H1 (cell line): ENCODE measurements at regions of chr1 and their contacts with region 1.

Region 1: DNA sequence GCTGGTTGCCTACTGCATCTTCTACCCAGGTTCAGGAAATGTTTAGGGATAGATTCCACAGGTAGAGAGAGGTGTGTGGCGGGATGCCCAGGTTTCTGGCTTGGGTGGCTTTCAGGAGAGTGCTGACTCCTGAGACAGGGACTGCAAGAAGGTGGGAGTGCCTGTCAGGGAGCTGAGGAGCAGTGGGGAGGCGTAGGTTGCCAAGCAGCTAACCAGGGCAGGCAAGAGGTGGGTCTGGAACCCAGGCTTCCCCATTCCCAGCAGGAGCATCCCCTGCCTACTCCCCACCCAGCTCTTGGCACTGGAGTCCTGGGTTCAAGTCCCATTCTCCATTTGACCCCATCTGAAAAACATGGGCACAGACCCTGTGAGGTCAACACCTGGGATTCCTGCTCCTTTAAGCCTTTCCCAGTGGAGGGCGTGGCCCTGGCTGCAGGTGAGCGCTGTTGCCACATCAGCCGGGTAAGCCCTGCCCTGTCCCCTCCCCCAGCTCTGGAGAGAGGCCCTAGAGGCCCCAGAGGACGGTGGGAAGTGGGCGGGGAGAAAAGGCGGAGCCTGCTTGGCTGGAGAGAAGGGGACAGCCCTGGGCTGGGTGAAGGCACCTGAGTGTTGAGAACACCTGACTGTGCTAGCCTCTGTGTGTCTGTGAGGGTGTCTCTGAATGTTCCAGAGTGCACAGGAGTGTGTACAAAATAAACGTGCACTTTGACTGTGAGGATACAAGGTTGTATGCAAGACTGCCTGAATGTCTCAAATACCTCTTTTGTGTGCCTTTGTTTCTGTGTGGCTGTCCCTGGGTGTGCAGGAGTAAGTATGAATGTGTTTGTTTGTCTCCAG is 14.0 kb upstream of the SYNC start:
- DNase-seq: peak; percentile 91 to 98
- H3K4me3 ChIP-seq: peak overlapping the region in 3 of 4 experiments; percentile 9 to 28 (median 20); a peak in 4 of 8 replicates
- H3K27ac ChIP-seq: peak overlapping the region; percentile 0; the same call in 1 of the 2 replicates
- H3K4me1 ChIP-seq: peaks cover 0 to 13% (median 13%) of the 10 kb centered on the region in 4 experiments; a peak in 6 of 7 replicates
- H3K27me3 ChIP-seq: no peaks in the 10 kb centered on the region; a peak in 1 of 7 replicates
- CTCF ChIP-seq: no peak
- EP300 ChIP-seq: peak in 1 of 2 experiments; percentile 58; a peak in 1 of 3 replicates
- POLR2A ChIP-seq: peak in 1 of 2 experiments; percentile 39; a peak in 1 of 3 replicates
- RAD21 ChIP-seq: no peak; a peak in 1 of 4 replicates

Region 2: GRCh38 chr1:32592943-32593342 is 123.6 kb before region 1 on chr1:
- CTCF ChIA-PET with region 1: no interaction called
- POLR2A ChIA-PET with region 1: no interaction called
- DNase-seq: no peak
- H3K4me3 ChIP-seq: no peak overlapping the region
- H3K27ac ChIP-seq: no peak overlapping the region
- H3K4me1 ChIP-seq: no peaks in the 10 kb centered on the region
- H3K27me3 ChIP-seq: no peaks in the 10 kb centered on the region
- CTCF ChIP-seq: no peak
- EP300 ChIP-seq: no peak
- POLR2A ChIP-seq: no peak
- RAD21 ChIP-seq: no peak

Region 3: GRCh38 chr1:32695098-32695904 is 21.2 kb before region 1 on chr1:
- CTCF ChIA-PET with region 1: interaction called, 18 read pairs
- POLR2A ChIA-PET with region 1: interaction called, 4 read pairs
- DNase-seq: no peak
- H3K4me3 ChIP-seq: no peak overlapping the region
- H3K27ac ChIP-seq: no peak overlapping the region
- H3K4me1 ChIP-seq: no peaks in the 10 kb centered on the region
- H3K27me3 ChIP-seq: no peaks in the 10 kb centered on the region
- CTCF ChIP-seq: no peak
- EP300 ChIP-seq: no peak
- POLR2A ChIP-seq: no peak
- RAD21 ChIP-seq: no peak

Region 4: DNA sequence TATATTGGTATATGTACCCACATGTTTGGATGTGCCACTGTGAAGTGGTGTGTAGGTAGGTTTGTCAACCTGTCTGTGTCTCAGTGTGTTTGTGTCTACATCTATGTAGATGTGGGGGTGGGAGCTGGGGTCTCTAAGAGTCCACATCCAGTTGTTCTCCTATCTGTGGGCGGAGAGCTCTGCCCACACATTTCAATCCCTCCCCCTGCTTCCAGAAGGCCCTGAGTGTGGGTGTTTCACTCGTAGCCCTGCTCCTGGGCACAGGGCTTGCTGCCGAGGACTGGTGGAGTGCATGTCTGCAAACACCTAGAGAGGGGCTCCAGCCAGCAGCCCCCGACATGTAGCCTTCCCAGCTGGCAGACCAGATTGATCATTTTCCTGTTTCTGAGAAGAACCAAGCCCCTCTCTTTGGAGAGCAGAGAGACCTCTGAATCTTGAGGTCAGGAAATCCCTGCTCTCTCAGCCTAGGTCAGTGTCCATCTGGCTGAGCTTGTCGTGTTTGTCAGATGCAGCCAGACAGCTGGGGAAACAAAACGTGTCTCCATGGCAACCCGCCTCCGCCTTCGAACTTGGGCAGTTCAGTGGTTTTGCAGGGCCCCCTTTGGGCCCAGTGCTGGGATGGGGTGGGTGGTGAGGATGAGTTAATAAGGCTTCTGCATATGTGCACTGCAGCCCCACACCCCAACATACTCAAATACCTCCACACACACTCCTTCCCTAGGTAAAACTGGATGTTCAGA is 17.2 kb after region 1 on chr1:
- CTCF ChIA-PET with region 1: interaction called, 56 read pairs
- POLR2A ChIA-PET with region 1: interaction called, 11 read pairs
- DNase-seq: no peak
- H3K4me3 ChIP-seq: no peak overlapping the region
- H3K27ac ChIP-seq: no peak overlapping the region
- H3K4me1 ChIP-seq: peaks cover 11 to 16% (median 14%) of the 10 kb centered on the region in 4 experiments
- H3K27me3 ChIP-seq: peaks cover 0 to 4% (median 0%) of the 10 kb centered on the region in 4 experiments; a peak in 1 of 7 replicates
- CTCF ChIP-seq: no peak
- EP300 ChIP-seq: no peak
- POLR2A ChIP-seq: no peak
- RAD21 ChIP-seq: no peak

Region 5: DNA sequence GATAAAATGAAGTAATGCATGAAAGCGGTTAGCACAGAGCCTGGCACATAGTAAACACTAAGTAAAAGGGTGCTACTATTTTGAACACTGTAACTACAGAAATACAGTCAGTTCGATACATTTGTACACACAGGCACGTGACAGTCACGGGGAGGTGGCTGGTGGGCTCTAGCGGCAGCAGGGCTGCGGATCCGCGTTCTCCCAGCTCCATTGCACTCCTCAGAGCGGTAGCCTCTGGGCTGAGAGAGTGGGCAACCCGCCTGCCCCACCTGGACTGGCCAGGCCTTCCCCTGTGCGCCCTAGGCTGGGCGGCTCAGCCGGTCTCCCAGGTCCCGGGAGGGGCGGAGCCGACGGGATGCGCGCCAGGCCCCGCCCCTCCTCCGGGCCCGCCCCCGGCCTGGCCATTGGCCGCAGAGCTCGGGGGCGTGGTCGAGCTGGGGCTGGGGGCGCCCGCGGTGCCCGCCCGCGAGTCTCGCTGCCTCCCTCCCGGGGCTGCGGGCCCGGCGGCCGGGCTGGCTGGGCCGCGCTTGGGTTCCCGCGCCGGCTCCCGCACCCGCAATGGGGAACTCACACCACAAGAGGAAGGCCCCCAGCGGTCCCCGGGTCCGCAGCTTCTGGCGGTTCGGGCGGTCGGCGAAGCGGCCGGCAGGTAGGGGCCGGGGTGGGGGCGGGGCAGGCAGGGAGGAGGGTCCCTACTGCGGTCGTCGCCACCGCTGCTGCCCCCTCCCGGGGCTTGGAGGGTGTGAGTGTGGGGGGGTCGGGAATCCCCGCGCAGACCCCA is 37.2 kb after region 1 on chr1:
- CTCF ChIA-PET with region 1: interaction called, 51 read pairs
- POLR2A ChIA-PET with region 1: interaction called, 18 read pairs
- DNase-seq: peak; percentile 59 to 91
- H3K4me3 ChIP-seq: peak overlapping the region; percentile 79 to 100 (median 94)
- H3K27ac ChIP-seq: peak overlapping the region; percentile 92
- H3K4me1 ChIP-seq: peaks cover 16 to 37% (median 22%) of the 10 kb centered on the region in 4 experiments
- H3K27me3 ChIP-seq: no peaks in the 10 kb centered on the region
- CTCF ChIP-seq: peak in 1 of 3 experiments; percentile 26; a peak in 1 of 4 replicates
- EP300 ChIP-seq: no peak
- POLR2A ChIP-seq: peak in 1 of 2 experiments; percentile 70; a peak in 2 of 3 replicates
- RAD21 ChIP-seq: peak; percentile 3 to 15; a peak in 2 of 4 replicates

Region 6: GRCh38 chr1:32786856-32787255 is 70.3 kb after region 1 on chr1:
- CTCF ChIA-PET with region 1: interaction called, 32 read pairs
- POLR2A ChIA-PET with region 1: interaction called, 3 read pairs
- DNase-seq: no peak
- H3K4me3 ChIP-seq: no peak overlapping the region
- H3K27ac ChIP-seq: no peak overlapping the region
- H3K4me1 ChIP-seq: no peaks in the 10 kb centered on the region
- H3K27me3 ChIP-seq: no peaks in the 10 kb centered on the region
- CTCF ChIP-seq: no peak; a peak in 1 of 4 replicates
- EP300 ChIP-seq: no peak
- POLR2A ChIP-seq: no peak
- RAD21 ChIP-seq: no peak; a peak in 1 of 4 replicates